ENCODE measurements at regions of chr6 and their contacts with region 1.

Region 1: DNA sequence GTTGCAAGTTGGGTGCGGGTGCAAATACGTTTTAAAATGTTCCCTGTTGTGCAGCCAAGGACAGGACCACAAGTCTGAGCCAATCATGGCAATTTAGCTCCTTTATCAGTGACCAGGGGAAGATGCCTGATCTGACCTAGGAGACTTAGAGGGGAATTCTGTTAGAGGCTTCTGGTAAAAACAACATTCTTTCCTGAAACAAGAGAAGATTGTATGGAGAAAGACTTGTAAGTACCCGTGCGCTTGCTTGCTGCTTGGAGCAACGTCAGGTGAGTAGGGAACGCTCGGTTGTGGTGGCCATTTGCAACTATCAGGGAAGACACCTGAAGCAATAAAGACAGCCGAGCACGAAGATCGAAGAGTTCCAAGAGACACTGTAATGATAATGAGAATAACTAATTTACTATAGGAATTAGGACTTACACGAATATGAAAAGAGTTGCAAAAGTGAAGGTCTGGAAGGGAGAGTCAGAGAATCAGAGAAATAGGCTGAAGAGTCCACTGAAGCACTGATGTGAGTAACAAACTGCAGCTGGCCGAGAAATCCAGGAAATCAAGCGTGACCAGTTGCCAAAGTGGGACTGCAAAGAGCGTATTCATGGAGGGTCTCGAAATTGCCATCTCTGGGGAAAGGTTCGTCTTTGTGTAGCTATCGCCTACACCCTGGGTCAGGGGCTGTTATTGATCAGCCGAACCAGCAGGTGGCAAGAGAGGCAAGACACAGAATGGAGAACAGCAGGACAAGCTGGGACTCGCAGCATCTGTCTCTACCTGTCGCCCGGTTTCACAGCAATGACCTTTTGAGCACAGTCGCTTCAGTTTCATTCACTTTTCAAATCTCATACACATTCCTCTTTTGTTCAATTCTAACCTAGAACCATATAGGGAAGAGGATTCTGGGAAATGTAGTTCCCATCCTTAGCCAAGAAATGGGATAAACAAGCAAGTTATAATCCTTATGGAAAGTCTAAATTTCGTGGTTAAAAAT is 26.1 kb downstream of the LOC128125822 start:
- DNase-seq: no peak
- H3K4me3 ChIP-seq: peak overlapping the region; percentile 56
- CTCF ChIP-seq: peak; percentile 88

Region 2: GRCh38 chr6:63333440-63333839 is 264.9 kb before region 1 on chr6:
- CTCF ChIA-PET with region 1: no interaction called
- POLR2A ChIA-PET with region 1: no interaction called
- DNase-seq: no peak
- H3K4me3 ChIP-seq: no peak overlapping the region
- CTCF ChIP-seq: no peak

Region 3: DNA sequence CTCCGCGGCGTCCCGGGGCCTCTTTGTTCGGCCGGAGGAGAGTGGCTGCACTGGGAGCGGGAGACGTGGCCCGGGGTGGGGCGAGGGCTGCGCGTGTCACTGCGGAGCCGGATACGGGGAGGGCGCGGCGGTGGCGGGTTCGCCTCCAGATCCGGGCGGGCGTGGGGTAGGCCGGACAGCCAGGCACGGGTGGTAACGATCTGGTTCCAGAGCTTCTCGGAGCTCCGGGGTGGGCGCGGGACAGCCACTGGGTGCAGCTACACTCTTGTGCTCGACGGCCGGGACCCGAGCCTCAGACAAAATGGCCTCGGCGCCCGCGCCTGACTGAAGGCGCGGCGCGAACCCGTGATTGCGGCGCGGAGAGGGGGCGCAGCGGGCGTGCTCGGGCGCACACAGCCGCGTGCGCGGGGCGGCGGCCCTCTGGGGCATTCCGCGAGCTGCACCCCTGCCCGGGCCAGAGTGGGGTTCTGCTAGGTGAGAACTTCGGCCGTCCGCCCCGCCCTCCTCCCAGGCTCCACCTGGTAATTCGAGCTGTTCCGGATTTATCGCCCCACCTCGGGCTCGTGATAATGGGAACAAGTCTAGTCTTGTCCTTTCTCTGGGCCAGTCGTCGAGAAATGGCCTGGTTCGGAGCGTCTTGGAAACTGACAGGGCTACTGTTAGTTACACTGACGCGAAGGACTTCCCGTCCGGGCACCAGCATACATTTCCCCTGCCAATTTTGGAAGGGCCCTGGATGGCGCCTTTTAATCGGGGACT is 25.0 kb before region 1 on chr6:
- CTCF ChIA-PET with region 1: interaction called, 23 read pairs
- POLR2A ChIA-PET with region 1: interaction called, 4 read pairs
- DNase-seq: peak; percentile 12
- H3K4me3 ChIP-seq: peak overlapping the region; percentile 81
- CTCF ChIP-seq: no peak

Region 4: DNA sequence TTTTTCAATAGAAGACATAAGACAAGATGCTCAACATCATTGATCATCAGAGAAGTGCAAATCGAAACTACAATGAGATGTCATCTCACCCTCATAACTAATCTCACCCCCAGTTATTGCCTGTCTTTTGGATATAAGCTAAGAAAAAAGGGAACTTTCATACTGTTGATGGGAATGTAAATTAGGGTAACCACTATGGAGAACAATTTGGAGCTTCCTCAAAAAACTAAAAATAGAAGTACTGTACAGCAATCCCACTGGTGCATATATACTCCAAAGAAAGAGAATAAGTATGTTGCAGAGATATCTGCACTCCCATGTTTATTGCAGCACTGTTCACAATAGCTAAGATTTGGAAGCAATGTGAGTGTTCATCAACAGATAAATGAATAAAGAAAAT is 10.9 kb after region 1 on chr6:
- CTCF ChIA-PET with region 1: interaction called, 27 read pairs
- POLR2A ChIA-PET with region 1: no interaction called
- DNase-seq: no peak
- H3K4me3 ChIP-seq: no peak overlapping the region
- CTCF ChIP-seq: no peak

Region 5: GRCh38 chr6:63630466-63630865 is 32.1 kb after region 1 on chr6:
- CTCF ChIA-PET with region 1: interaction called, 34 read pairs
- POLR2A ChIA-PET with region 1: no interaction called
- DNase-seq: no peak
- H3K4me3 ChIP-seq: no peak overlapping the region
- CTCF ChIP-seq: no peak

Region 6: DNA sequence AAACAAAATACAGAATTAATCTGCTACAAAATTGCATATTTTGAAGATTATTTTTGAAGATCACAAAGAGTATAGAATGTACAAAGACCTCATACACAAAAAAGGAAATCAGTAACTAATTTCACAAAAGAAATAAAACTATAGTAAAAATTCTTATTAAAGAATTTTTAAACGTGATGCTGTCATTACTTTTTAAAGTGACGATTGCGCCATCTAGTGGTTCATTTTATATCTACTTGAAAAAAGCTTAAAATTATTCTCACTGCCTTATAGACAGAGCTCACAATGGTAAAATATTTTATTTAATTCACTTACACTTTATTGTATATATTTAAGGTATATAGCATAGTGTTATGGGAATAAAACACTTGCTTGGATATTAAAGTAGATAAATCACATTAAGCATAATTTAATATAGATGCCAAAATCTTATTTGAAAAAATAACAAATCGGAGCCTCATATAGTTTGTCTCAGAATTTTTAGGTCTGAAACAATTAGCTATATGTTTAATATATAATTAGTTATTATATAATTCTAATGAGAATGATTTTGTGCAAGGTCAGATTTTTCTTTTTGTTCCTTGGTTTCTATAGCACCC is 166.1 kb after region 1 on chr6:
- CTCF ChIA-PET with region 1: interaction called, 17 read pairs
- POLR2A ChIA-PET with region 1: no interaction called
- DNase-seq: no peak
- H3K4me3 ChIP-seq: no peak overlapping the region
- CTCF ChIP-seq: no peak